Tibial artery (tissue), 4 donors: ENCODE measurements at regions of chr9 and their contacts with region 1.

Region 1: DNA sequence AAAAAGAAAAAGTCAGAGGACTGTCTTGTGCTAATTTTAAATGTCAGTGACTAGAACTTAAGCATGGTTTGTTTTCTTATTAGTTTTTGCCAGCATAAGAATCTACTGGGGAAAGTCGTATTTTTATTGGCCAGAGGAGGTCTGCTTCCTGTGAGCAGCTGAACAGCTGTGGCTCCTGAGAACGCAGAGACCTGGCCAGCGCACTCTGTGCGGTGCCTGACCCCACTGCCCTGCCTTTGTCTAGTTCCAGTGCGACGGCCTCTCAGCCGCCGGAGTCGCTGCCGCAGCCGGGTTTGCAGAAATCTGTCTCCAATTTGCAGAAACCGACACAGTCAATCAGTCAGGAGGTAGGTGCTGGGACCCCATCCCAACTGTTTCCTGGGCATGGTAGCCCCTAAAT is 42.5 kb downstream of the PRRC2B start:
- DNase-seq: peak in 1 of 2 donors; percentile 78
- H3K4me3 ChIP-seq: no peak overlapping the region
- H3K27ac ChIP-seq: peak overlapping the region; percentile 56 to 68
- H3K4me1 ChIP-seq: peaks cover 0 to 59% (median 45%) of the 10 kb centered on the region in 4 donors
- H3K27me3 ChIP-seq: no peaks in the 10 kb centered on the region
- CTCF ChIP-seq: no peak

Region 2: GRCh38 chr9:131386281-131386680 is 50.1 kb before region 1 on chr9:
- intact Hi-C with region 1: loop called (anchors 5 kb)
- DNase-seq: no peak
- H3K4me3 ChIP-seq: no peak overlapping the region
- H3K27ac ChIP-seq: no peak overlapping the region
- H3K4me1 ChIP-seq: peaks cover 0 to 12% (median 4%) of the 10 kb centered on the region in 4 donors
- H3K27me3 ChIP-seq: no peaks in the 10 kb centered on the region
- CTCF ChIP-seq: no peak